Prostate gland (tissue), 2 donors: ENCODE measurements at regions of chr12 and their contacts with region 1.

Region 1: DNA sequence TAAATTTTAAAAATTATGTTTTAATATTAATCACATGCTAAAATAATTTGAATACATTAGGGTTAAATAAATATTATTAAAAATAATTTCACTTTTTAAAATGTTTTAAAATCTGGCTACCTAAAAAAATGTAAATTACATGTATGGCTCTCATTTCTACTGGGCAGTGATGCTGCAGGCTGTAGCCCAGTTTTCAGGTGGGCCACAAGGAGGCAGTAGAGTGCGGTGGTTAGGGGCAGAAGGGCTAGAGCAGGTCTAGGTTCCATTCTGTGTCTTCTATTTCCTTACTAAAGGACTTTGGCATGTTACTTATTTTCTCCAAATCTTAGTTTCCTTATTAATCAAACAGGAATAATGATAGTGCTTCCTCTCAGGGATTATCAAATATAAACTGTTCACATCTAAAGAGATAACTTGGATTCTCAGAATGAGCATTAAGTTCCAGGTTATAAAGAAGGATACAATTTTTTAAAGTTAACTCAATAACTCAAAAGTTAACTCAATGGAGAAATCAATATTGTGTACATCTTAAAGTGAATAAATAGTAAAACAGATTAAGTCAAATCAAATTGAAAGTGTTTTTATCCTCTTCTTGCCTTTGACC is 54.9 kb upstream of the OVCH1 start:
- DNase-seq: peak; percentile 40
- H3K4me3 ChIP-seq: no peak overlapping the region
- H3K27ac ChIP-seq: no peak overlapping the region
- H3K4me1 ChIP-seq: no peaks in the 10 kb centered on the region
- H3K27me3 ChIP-seq: no peaks in the 10 kb centered on the region
- CTCF ChIP-seq: peak; percentile 59 to 85 (median 76)
- POLR2A ChIP-seq: no peak

Region 2: DNA sequence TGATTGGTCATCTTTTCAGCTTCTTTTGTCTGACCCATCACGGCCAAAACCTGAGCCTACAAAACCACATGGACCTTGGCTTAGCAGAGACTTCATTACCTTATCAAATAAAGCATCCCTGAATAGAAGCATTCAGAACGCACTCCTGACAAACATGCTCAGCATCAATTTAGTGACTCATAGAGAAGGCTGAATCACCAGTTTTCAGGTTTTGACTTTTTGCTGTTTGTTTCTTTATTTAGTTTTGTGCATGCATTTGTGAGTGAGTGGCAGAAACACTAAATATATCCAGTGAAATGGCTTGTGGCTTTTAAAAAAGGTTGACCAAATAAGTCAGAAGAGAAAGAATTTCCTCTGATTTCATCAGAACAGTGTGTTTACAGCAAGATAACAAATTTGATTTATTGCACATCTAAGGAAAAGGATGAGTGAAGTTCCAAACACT is 36.0 kb before region 1 on chr12:
- intact Hi-C with region 1: no loop called
- DNase-seq: no peak
- H3K4me3 ChIP-seq: no peak overlapping the region
- H3K27ac ChIP-seq: no peak overlapping the region
- H3K4me1 ChIP-seq: no peaks in the 10 kb centered on the region
- H3K27me3 ChIP-seq: no peaks in the 10 kb centered on the region
- CTCF ChIP-seq: no peak
- POLR2A ChIP-seq: no peak

Region 3: GRCh38 chr12:29782285-29782870 is 230.0 kb after region 1 on chr12:
- intact Hi-C with region 1: loop called (anchors 5 kb)
- DNase-seq: peak; percentile 11
- H3K4me3 ChIP-seq: peak overlapping the region; percentile 60 to 62
- H3K27ac ChIP-seq: peak overlapping the region; percentile 58 to 66
- H3K4me1 ChIP-seq: no peaks in the 10 kb centered on the region
- H3K27me3 ChIP-seq: no peaks in the 10 kb centered on the region
- CTCF ChIP-seq: no peak
- POLR2A ChIP-seq: no peak

Region 4: DNA sequence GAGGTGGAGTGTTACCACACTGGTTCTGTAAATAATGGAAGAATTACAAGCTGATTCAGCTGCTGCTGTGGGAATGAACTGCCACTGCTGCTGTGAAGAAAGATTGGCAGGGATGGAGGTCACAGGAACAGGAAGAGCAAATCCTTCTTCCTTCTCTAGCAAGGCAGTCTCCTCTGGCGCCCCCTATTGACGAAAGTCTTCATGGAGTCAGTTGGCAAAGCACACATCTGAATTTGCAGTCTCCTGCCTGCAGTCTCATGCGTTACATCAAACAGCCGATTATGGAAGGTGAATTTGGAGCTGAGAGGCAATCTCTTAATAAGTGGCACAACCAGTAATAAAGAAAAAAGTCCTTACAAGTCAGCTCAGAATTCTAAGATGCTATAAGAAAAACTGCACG is 337.3 kb after region 1 on chr12:
- intact Hi-C with region 1: loop called (anchors 10 kb)
- DNase-seq: peak; percentile 48
- H3K4me3 ChIP-seq: no peak overlapping the region
- H3K27ac ChIP-seq: no peak overlapping the region
- H3K4me1 ChIP-seq: no peaks in the 10 kb centered on the region
- H3K27me3 ChIP-seq: no peaks in the 10 kb centered on the region
- CTCF ChIP-seq: peak in 3 of 4 experiments; percentile 11 to 48 (median 37)
- POLR2A ChIP-seq: no peak

Region 5: GRCh38 chr12:29940811-29941210 is 388.4 kb after region 1 on chr12:
- intact Hi-C with region 1: no loop called
- DNase-seq: no peak
- H3K4me3 ChIP-seq: no peak overlapping the region
- H3K27ac ChIP-seq: no peak overlapping the region
- H3K4me1 ChIP-seq: no peaks in the 10 kb centered on the region
- H3K27me3 ChIP-seq: no peaks in the 10 kb centered on the region
- CTCF ChIP-seq: no peak
- POLR2A ChIP-seq: no peak